ENCODE measurements at regions of chr3 and their contacts with region 1.

Region 1: GRCh38 chr3:112043603-112044201 is 9.2 kb downstream of the TMPRSS7 start:
- DNase-seq: peak; percentile 29
- H3K4me3 Mint-ChIP-seq: no peak overlapping the region
- H3K27ac Mint-ChIP-seq: no peak overlapping the region
- H3K4me1 Mint-ChIP-seq: no peaks in the 10 kb centered on the region
- H3K27me3 Mint-ChIP-seq: no peaks in the 10 kb centered on the region

Region 2: GRCh38 chr3:111717601-111718000 is 326.1 kb before region 1 on chr3:
- intact Hi-C with region 1: loop called (anchors 1 kb)
- DNase-seq: peak; percentile 44
- H3K4me3 Mint-ChIP-seq: no peak overlapping the region
- H3K27ac Mint-ChIP-seq: peak overlapping the region; percentile 70
- H3K4me1 Mint-ChIP-seq: peaks cover 8% of the 10 kb centered on the region
- H3K27me3 Mint-ChIP-seq: no peaks in the 10 kb centered on the region

Region 3: DNA sequence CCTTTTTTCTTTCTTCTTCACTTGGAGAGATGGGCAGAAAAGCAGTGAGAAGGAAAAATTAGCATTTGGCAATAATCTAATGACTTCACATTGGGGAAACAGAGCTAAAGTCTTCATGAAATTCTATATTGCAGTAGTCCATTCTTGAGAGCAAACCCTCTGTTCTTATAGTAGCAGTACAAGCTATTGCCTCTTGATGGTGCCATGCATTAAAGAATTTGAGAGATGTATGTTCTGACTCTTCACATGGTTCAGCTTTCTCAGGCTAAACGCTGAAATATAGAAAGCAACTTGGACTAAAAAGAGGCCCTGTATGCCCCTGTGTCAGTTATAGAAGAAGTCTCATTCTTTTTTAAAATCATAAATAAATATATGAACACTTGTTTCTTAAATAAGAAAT is 148.6 kb before region 1 on chr3:
- intact Hi-C with region 1: loop called (anchors 1 kb)
- DNase-seq: no peak
- H3K4me3 Mint-ChIP-seq: no peak overlapping the region
- H3K27ac Mint-ChIP-seq: no peak overlapping the region
- H3K4me1 Mint-ChIP-seq: no peaks in the 10 kb centered on the region
- H3K27me3 Mint-ChIP-seq: no peaks in the 10 kb centered on the region

Region 4: GRCh38 chr3:111989061-111989678 is 54.5 kb before region 1 on chr3:
- intact Hi-C with region 1: loop called (anchors 1 kb)
- DNase-seq: no peak
- H3K4me3 Mint-ChIP-seq: no peak overlapping the region
- H3K27ac Mint-ChIP-seq: no peak overlapping the region
- H3K4me1 Mint-ChIP-seq: peaks cover 44% of the 10 kb centered on the region
- H3K27me3 Mint-ChIP-seq: no peaks in the 10 kb centered on the region